CD4-positive, alpha-beta T cell (primary cell): ENCODE measurements at regions of chr14 and their contacts with region 1.

Region 1: GRCh38 chr14:94173885-94174603 is at the start of gene PPP4R4:
- DNase-seq: peak; percentile 75 to 95 (median 88)
- ATAC-seq: peak; percentile 90
- H3K4me3 ChIP-seq: peak within 1 kb of the TSS; percentile 79
- H3K4me3 Mint-ChIP-seq: peak within 1 kb of the TSS; percentile 88
- H3K27ac ChIP-seq: no peak within 1 kb of the TSS
- H3K27ac Mint-ChIP-seq: peak within 1 kb of the TSS; percentile 11
- H3K4me1 ChIP-seq: peaks cover 23% of the 10 kb centered on the region
- H3K4me1 Mint-ChIP-seq: peaks cover 30% of the 10 kb centered on the region
- H3K27me3 ChIP-seq: peaks cover 4 to 7% of the 10 kb centered on the region in 2 experiments
- H3K27me3 Mint-ChIP-seq: peaks cover 7% of the 10 kb centered on the region
- CTCF ChIP-seq: no peak
- total RNA-seq, gene PPP4R4: 3.5 to 4.3 TPM

Region 2: DNA sequence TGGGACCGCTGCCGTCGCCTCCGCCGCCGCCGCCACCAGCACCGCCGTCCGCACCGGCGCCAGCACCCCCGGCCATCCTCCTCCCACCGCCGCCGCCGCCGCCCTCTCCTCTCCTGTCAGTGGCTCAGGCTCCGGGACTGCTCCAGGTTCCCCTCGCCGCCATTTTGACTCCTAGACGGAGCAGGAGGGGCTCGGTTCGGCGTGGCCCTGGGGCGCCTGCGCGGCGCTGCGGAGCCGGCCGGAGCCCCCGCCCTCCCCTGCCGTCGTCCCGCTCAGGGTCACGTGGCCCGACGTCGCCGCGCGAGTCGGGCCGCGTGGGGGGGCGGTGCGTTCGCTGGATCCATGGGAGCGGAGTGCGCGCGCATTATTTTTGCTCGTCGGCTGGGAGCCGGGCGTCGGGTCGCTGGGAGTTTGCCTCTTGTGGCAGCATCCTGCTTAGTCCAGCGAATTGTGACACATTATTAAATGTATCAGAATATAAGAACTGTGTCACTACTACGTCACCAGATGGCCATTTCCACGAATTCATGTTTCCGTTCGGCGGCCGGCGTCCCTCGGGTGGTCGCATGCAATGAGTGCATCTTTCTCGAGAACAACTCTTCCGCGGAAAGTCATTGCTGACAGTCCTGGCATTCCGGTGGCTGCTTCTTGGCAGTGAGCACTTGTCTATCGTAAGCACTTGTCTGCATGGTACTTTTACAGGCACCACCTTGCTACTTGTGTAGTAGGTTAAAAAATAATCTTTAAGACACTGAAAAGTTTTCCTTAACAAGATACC is 841.0 kb before region 1 on chr14 and contains the start of gene BTBD7:
- CTCF ChIA-PET with region 1: no interaction called
- POLR2A ChIA-PET with region 1: no interaction called
- intact Hi-C with region 1: loop called in 1 of 2 experiments (anchors 5 kb)
- DNase-seq: peak; percentile 88 to 99 (median 92)
- ATAC-seq: peak; percentile 94
- H3K4me3 ChIP-seq: peak within 1 kb of the TSS; percentile 80
- H3K4me3 Mint-ChIP-seq: peak within 1 kb of the TSS; percentile 97
- H3K27ac ChIP-seq: peak within 1 kb of the TSS; percentile 52 to 73
- H3K27ac Mint-ChIP-seq: peak within 1 kb of the TSS; percentile 92
- H3K4me1 ChIP-seq: peaks cover 20% of the 10 kb centered on the region
- H3K4me1 Mint-ChIP-seq: peaks cover 58% of the 10 kb centered on the region
- H3K27me3 ChIP-seq: no peaks in the 10 kb centered on the region
- H3K27me3 Mint-ChIP-seq: no peaks in the 10 kb centered on the region
- CTCF ChIP-seq: no peak
- total RNA-seq, gene BTBD7: 12.5 to 12.6 TPM

Region 3: DNA sequence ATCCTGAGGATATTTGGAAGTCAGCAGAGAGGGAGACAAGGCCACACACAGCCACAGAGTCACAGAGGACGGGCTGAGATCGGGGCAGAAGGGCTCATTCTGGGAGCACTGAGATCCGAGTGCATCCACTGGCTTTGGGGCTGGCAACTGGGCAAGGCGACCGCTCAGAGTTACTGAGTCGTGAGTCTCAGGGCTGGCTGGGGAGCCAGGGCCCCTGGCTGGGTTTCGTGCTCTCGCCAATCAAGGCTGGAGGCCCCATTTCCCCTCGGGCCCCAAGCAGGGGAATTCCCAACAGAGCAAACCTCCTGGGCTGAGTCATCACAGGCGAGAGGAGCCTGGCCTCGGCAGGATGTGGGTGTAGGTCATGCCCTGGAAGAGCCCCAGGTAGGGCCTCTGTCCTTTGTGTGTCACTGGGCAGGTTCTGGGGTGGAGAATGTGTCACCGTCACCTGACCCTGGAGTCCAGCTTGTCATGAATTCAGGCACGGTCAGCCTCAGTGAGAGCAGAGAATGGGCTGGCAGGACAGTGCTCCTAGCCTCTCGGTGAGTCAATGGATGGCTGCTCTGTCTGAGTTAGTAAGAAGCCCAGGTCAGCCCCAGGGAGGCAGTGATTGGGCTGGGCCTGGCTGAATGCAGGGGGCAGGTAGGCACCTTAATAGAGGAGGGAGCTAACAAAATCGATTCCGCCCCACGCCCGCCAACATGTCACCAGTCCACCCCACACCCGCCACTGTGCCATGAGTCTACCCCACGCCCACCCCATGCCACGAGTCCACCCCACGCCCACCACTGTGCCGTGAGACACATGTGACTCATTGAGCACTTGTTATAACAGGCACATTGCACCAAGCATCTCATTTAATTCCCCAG is 214.6 kb before region 1 on chr14:
- CTCF ChIA-PET with region 1: no interaction called
- POLR2A ChIA-PET with region 1: no interaction called
- intact Hi-C with region 1: loop called in 1 of 2 experiments (anchors 5 kb)
- DNase-seq: peak; percentile 77 to 98 (median 88)
- ATAC-seq: peak; percentile 79
- H3K4me3 ChIP-seq: peak overlapping the region; percentile 24
- H3K4me3 Mint-ChIP-seq: peak overlapping the region; percentile 76
- H3K27ac ChIP-seq: peak overlapping the region; percentile 42 to 71
- H3K27ac Mint-ChIP-seq: peak overlapping the region; percentile 91
- H3K4me1 ChIP-seq: peaks cover 100% of the 10 kb centered on the region
- H3K4me1 Mint-ChIP-seq: peaks cover 96% of the 10 kb centered on the region
- H3K27me3 ChIP-seq: no peaks in the 10 kb centered on the region
- H3K27me3 Mint-ChIP-seq: no peaks in the 10 kb centered on the region
- CTCF ChIP-seq: no peak

Region 4: DNA sequence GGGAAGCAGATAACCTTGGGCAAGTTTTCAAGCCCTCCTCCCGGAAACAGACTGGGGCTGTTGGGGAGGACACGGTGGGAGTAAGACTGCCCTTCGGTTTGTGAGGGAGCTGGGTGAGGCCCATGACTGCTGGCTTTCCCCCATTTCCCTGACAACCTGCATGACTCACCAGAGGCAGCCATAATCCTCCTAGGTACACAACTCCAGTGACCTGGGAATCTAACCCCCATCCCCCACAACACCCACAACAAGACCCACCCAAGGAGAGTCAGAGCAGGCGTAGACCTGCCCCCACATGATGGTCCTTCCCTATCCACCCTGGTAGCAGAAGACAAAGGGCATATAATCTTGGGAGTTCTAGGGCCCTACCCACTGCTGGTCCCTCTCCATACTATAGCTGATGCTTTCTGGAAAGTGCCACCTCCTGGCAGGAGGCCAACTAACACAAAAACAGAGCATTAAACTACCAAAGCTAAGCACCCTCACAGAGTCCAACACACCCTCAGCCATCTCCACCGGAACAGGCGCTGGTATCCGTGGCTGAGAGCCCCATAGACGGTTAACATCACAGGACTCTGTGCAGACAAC is 107.9 kb before region 1 on chr14:
- CTCF ChIA-PET with region 1: no interaction called
- POLR2A ChIA-PET with region 1: no interaction called
- intact Hi-C with region 1: no loop called
- DNase-seq: no peak
- ATAC-seq: no peak
- H3K4me3 ChIP-seq: no peak overlapping the region
- H3K4me3 Mint-ChIP-seq: peak overlapping the region; percentile 23
- H3K27ac ChIP-seq: no peak overlapping the region
- H3K27ac Mint-ChIP-seq: no peak overlapping the region
- H3K4me1 ChIP-seq: peaks cover 27% of the 10 kb centered on the region
- H3K4me1 Mint-ChIP-seq: peaks cover 95% of the 10 kb centered on the region
- H3K27me3 ChIP-seq: no peaks in the 10 kb centered on the region
- H3K27me3 Mint-ChIP-seq: no peaks in the 10 kb centered on the region
- CTCF ChIP-seq: no peak

Region 5: GRCh38 chr14:94158239-94158883 is 15.7 kb before region 1 on chr14:
- CTCF ChIA-PET with region 1: no interaction called
- POLR2A ChIA-PET with region 1: interaction called, 27 read pairs
- intact Hi-C with region 1: no loop called
- DNase-seq: peak in 10 of 14 experiments; percentile 8 to 82 (median 28)
- ATAC-seq: peak; percentile 81
- H3K4me3 ChIP-seq: no peak overlapping the region
- H3K4me3 Mint-ChIP-seq: peak overlapping the region; percentile 21
- H3K27ac ChIP-seq: no peak overlapping the region
- H3K27ac Mint-ChIP-seq: peak overlapping the region; percentile 67
- H3K4me1 ChIP-seq: peaks cover 47% of the 10 kb centered on the region
- H3K4me1 Mint-ChIP-seq: peaks cover 56% of the 10 kb centered on the region
- H3K27me3 ChIP-seq: peaks cover 0 to 3% of the 10 kb centered on the region in 2 experiments
- H3K27me3 Mint-ChIP-seq: no peaks in the 10 kb centered on the region
- CTCF ChIP-seq: no peak

Region 6: DNA sequence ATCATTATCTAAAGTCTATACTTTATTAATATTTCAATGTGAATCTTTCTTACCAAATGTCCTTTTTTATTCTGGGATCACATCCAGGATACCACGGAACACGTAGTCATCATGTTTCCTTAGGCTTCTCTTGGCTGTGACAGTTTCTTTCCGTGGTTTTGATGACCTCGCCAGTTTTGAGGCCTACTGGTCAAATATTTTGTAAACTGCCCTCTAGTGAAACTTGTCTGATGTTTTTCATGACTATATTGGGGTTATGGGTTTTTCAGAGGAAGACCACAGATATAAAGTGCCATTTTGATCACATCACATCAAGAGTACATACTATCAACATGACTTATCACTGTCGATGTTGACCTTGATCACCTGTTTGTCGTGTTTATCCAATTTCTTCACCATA is 163.2 kb after region 1 on chr14:
- CTCF ChIA-PET with region 1: no interaction called
- POLR2A ChIA-PET with region 1: no interaction called
- intact Hi-C with region 1: no loop called
- DNase-seq: no peak
- ATAC-seq: no peak
- H3K4me3 ChIP-seq: no peak overlapping the region
- H3K4me3 Mint-ChIP-seq: no peak overlapping the region
- H3K27ac ChIP-seq: no peak overlapping the region
- H3K27ac Mint-ChIP-seq: no peak overlapping the region
- H3K4me1 ChIP-seq: no peaks in the 10 kb centered on the region
- H3K4me1 Mint-ChIP-seq: peaks cover 12% of the 10 kb centered on the region
- H3K27me3 ChIP-seq: no peaks in the 10 kb centered on the region
- H3K27me3 Mint-ChIP-seq: peaks cover 29% of the 10 kb centered on the region
- CTCF ChIP-seq: no peak

Region 7: DNA sequence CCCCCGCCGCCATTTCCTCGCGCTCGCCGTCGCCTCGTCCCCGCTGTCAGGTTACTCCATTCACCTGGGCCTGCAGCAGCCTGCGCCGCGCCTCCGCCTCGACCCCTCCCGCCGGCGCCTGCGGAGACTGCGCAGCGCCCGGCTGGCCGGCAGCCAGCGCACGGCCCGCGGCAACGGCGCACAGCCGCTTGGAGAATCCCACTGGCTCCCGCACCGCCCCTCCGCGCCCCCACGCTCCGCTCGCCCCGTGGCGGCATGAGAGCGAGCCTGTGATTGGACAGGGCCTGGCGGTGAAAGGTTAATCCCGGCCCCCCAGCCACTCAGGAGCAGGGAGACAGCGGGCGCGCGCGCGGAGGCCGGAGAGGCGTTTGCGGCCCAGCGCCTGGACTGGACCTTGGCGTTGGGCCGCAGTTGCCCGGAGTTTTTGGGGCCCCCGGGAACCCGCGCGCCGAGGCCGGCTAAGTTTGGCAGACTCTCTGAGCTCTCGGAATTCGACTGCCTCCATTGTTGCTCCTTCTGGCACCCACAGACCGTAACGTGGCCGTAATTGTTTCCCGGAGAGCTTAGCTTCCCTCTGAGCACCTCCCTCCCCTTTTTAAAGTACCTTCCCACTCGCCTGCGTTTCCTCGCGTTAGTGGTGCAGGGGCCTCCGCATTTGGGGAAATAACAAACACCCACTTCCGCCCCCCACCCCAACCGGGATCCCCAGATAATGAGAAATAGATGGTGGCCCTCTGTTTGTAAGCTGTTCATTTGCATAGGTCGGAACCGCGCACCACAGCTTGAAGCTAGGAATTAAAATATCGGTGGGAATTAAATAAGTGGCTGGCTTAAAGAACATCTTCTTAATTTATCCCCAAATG is 983.5 kb after region 1 on chr14 and contains the start of gene DICER1:
- CTCF ChIA-PET with region 1: no interaction called
- POLR2A ChIA-PET with region 1: no interaction called
- intact Hi-C with region 1: loop called in 1 of 2 experiments (anchors 5 kb)
- DNase-seq: peak; percentile 89 to 96 (median 93)
- ATAC-seq: peak; percentile 73
- H3K4me3 ChIP-seq: peak within 1 kb of the TSS; percentile 83
- H3K4me3 Mint-ChIP-seq: peak within 1 kb of the TSS; percentile 99
- H3K27ac ChIP-seq: peak within 1 kb of the TSS; percentile 87 to 93
- H3K27ac Mint-ChIP-seq: peak within 1 kb of the TSS; percentile 100
- H3K4me1 ChIP-seq: peaks cover 28% of the 10 kb centered on the region
- H3K4me1 Mint-ChIP-seq: peaks cover 49% of the 10 kb centered on the region
- H3K27me3 ChIP-seq: no peaks in the 10 kb centered on the region
- H3K27me3 Mint-ChIP-seq: no peaks in the 10 kb centered on the region
- CTCF ChIP-seq: no peak
- total RNA-seq, gene DICER1: 53.7 to 66.0 TPM